G401 (cell line): ENCODE measurements at regions of chr9 and their contacts with region 1.

Region 1: GRCh38 chr9:132560616-132561202 is 21.7 kb upstream of the BARHL1 start:
- DNase-seq: peak; percentile 86

Region 2: GRCh38 chr9:132406554-132407122 is 154.1 kb before region 1 on chr9 and contains the start of gene TTF1:
- in situ Hi-C with region 1: loop called (anchors 10 kb)
- DNase-seq: peak; percentile 92
- total RNA-seq, gene TTF1: 7.8 and 18.4 TPM in 2 replicates